KBM-7 (cell line): ENCODE measurements at regions of chr16 and their contacts with region 1.

Region 1: DNA sequence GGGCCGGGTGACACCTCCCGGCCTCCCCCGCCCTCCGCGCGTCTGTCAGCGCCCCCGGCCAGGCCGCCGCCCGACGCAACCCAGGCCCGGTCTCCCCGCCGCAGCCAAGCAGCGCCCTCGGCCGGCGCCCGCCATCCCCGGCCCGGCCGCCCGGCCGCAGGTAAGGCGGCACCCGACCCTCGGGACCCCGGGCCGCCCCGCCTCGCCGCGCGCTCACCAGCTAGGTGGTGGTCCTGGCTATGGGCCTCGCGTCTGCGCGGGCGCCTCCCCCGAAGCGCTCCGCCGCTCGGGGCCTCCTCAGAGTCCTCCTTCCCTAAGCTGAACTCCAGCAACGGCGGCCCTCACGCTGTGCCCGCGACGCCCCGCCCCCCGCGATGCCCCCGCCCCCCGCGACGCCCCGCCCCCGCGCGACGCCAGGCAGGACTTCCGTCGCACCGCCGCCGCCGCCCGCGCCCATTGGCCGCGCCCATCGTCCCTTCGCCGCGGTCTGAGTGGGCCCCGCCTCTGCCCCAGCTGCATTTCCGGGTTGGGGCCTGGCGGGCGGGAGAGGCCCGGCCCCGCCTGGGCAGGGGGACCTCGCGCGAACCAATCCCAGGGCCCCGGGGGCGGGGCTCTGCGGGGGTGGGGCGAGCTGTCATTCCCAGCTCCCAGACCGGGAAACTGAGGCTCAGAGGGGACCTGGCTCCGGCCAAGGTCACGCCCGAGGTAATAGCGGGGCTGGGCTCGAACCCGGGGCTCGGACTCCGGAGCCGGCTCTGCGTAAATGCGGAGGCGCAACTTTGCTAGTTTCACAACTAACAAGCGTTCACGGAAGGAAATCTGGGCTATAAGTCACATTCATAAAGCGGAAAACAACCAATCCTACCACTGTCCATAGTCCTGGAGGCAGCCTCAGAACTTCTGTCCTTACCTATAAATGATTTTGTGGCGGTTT is 9.0 kb upstream of the KCTD5 start:
- DNase-seq: peak; percentile 94

Region 2: DNA sequence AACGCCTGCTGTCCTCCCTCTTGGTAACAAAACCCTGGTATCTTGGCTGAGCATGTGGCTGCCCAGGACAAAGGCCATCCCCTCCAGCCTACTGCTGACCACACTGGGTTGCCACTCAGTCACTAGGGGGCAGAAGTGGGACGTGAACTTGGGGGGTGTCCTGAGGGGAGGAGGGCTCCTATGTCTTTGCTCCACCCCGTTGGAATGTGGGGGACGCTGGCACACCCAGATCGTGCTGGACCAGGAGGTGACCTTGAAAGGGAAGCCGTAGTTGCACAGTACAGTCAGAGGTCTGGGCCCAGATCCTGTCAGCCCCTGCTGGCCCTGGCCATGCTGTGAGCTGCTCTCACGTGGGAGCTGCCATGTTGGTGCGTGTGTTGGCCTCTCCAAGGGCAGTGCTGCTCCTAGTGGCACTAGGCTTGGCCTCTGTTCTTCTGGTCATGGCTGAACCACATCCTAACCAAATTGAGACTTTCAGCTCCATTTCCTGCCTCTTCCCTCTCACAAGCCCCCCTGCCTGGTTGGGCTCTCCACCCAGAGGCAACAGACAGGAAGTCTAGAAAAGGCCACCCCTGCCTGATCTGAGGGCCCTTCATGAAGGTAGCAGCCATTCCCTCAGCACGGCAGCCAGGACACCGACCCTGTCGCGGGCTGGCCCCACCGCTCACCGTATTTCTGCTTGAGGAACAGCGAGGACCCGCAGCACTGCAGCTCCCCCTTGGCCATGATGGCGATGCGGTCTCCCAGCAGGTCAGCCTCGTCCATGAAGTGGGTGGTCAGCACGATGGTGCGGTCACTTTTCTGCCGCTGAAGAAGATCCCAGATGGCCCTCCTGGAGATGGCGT is 376.4 kb before region 1 on chr16:
- in situ Hi-C with region 1: loop called (anchors 25 kb)
- DNase-seq: peak; percentile 22

Region 3: GRCh38 chr16:2595393-2596205 is 77.7 kb before region 1 on chr16:
- in situ Hi-C with region 1: no loop called
- DNase-seq: no peak

Region 4: DNA sequence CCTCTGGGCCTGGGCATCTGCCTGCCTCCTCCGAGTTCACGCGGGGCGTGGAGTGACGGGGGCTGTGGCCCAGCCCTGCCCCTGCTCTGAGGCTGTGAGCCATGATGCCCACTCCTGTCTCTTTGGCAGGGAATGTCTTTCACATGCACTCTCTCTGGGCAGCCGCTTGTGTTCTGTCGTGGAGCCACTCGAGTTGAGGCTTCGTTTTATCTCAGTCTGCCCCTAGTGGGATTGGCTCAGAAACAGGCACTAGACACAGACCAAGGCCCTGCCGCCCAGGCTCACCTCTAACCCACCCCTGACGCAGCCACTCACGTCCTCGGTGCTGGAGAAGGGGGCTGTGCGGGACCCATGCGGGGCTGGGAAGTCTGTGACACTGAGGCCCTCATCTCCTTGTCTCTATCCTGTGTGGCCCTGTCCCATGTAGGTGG is 58.6 kb before region 1 on chr16:
- in situ Hi-C with region 1: no loop called
- DNase-seq: no peak